Activated CD8-positive, alpha-beta memory T cell treated with anti-CD3 and anti-CD28 coated beads, Interleukin-2, amount 10 ng/mL, durations not matched to agents 7 days and 5 days (primary cell): ENCODE measurements at regions of chr1 and their contacts with region 1.

Region 1: GRCh38 chr1:37859507-37860345 is at the start of gene MTF1:
- DNase-seq: peak; percentile 98
- ATAC-seq: peak; percentile 99
- H3K4me3 Mint-ChIP-seq: peak within 1 kb of the TSS; percentile 93
- H3K27ac Mint-ChIP-seq: peak within 1 kb of the TSS; percentile 97
- H3K4me1 Mint-ChIP-seq: peaks cover 34% of the 10 kb centered on the region
- H3K27me3 Mint-ChIP-seq: no peaks in the 10 kb centered on the region
- total RNA-seq, gene MTF1: 26.4 to 29.3 TPM

Region 2: DNA sequence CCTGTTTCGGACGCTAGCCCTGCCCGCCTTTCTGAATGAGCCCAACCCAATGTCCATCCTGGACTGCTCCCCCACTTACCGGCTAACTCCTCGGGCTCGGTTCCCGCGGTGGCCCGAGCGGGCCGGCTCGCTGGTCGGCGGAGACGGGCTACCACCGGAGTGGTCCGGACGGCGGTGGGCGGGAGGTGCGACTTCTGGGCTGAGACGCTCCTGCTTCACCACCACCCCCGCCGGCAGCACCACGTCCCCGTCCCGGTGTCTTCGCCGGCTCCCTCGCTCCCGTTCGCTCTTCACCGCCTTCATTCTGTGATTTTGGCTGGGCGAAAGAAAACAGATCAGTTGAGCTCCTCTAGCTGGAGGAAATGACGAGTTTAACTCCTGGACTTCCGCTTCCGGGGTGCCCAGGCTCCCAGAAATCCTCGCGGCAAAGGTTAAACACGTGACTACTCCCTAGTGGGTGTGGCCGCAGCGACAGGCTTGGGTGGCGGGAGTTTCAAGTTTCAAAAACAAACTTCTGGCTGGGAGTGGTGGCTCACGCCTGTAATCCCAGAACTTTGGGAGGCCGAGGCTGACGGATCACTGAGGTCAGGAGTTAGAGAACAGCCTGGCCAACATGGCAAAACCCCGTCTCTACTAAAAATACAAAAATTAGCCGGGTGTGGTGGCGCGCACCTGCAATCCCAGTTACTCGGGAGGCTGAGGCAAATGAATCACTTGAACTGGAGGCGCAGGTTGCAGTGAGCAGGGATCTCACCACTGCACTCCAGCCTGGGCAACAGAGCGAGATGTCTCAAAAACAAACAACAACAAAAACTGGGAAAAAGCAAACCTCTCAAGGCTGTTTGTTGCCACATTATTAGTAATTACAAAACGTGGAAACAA is 305.6 kb before region 1 on chr1 and contains the start of gene SNIP1:
- CTCF ChIA-PET with region 1: interaction called, 11 read pairs
- DNase-seq: peak; percentile 96
- ATAC-seq: peak; percentile 92
- H3K4me3 Mint-ChIP-seq: peak within 1 kb of the TSS; percentile 94
- H3K27ac Mint-ChIP-seq: peak within 1 kb of the TSS; percentile 96
- H3K4me1 Mint-ChIP-seq: peaks cover 54% of the 10 kb centered on the region
- H3K27me3 Mint-ChIP-seq: no peaks in the 10 kb centered on the region
- total RNA-seq, gene SNIP1: 28.4 to 29.4 TPM

Region 3: GRCh38 chr1:37692078-37692833 is 167.5 kb before region 1 on chr1 and contains the start of gene CDCA8:
- CTCF ChIA-PET with region 1: interaction called, 17 read pairs
- DNase-seq: peak; percentile 99
- ATAC-seq: peak; percentile 88
- H3K4me3 Mint-ChIP-seq: peak within 1 kb of the TSS; percentile 94
- H3K27ac Mint-ChIP-seq: peak within 1 kb of the TSS; percentile 94
- H3K4me1 Mint-ChIP-seq: peaks cover 59% of the 10 kb centered on the region
- H3K27me3 Mint-ChIP-seq: no peaks in the 10 kb centered on the region
- total RNA-seq, gene CDCA8: 77.2 to 97.3 TPM

Region 4: GRCh38 chr1:37752583-37753471 is 106.9 kb before region 1 on chr1:
- CTCF ChIA-PET with region 1: no interaction called
- DNase-seq: no peak
- ATAC-seq: peak; percentile 68
- H3K4me3 Mint-ChIP-seq: peak overlapping the region; percentile 44
- H3K27ac Mint-ChIP-seq: no peak overlapping the region
- H3K4me1 Mint-ChIP-seq: peaks cover 7% of the 10 kb centered on the region
- H3K27me3 Mint-ChIP-seq: peaks cover 40% of the 10 kb centered on the region

Region 5: DNA sequence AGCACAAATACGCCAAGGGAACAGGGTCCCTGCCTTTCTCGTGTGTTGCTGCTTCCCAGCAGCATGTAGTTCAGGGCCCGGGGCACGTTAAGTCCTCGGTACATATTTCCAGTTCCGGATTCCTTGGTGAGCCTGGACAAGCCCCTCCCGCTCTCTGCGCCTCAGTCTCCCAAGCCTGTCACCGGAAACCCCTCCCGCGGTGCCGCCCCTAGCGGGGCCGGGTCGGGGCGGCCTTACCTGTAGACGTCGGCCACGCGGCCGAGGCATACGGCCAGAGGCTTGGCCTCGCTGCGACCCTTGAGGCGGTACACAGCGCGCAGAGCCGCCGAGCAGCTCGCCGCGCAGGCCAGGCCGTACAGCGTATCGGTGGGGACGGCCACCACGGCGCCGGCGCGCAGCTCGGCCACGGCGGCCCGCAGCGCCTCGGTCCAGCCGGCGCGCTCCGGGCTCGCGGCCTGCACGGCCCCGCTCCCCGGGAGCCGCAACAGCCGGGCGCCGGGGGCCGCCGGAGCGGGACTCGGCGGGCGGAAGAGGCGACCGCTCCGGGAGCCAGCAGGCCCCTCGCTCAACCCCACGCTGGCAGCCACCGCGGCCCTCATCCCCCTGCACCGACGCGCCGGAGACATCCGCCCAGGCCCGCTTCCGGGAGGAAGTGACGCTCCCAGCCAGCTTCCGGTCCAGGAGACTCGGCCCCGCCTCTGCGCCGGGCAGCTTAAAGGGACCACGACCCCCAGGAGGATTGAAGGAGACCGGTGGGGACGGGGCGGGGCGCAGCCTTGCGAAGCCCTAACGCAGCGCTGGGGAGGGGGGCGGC is 52.0 kb before region 1 on chr1 and contains the starts of genes C1orf122 and YRDC:
- CTCF ChIA-PET with region 1: interaction called, 38 read pairs
- DNase-seq: peak; percentile 95
- ATAC-seq: peak; percentile 92
- H3K4me3 Mint-ChIP-seq: peak within 1 kb of the TSS; percentile 87
- H3K27ac Mint-ChIP-seq: peak within 1 kb of the TSS; percentile 88
- H3K4me1 Mint-ChIP-seq: peaks cover 27% of the 10 kb centered on the region
- H3K27me3 Mint-ChIP-seq: no peaks in the 10 kb centered on the region
- total RNA-seq, gene C1orf122: 19.8 to 21.9 TPM
- total RNA-seq, gene YRDC: 16.4 to 28.6 TPM

Region 6: GRCh38 chr1:37822906-37823815 is 36.6 kb before region 1 on chr1:
- CTCF ChIA-PET with region 1: interaction called, 13 read pairs
- DNase-seq: peak; percentile 53
- ATAC-seq: peak; percentile 42
- H3K4me3 Mint-ChIP-seq: no peak overlapping the region
- H3K27ac Mint-ChIP-seq: peak overlapping the region; percentile 45
- H3K4me1 Mint-ChIP-seq: peaks cover 23% of the 10 kb centered on the region
- H3K27me3 Mint-ChIP-seq: no peaks in the 10 kb centered on the region

Region 7: GRCh38 chr1:37846647-37847339 is 12.9 kb before region 1 on chr1:
- CTCF ChIA-PET with region 1: interaction called, 39 read pairs
- DNase-seq: no peak
- ATAC-seq: no peak
- H3K4me3 Mint-ChIP-seq: peak overlapping the region; percentile 59
- H3K27ac Mint-ChIP-seq: peak overlapping the region; percentile 47
- H3K4me1 Mint-ChIP-seq: peaks cover 35% of the 10 kb centered on the region
- H3K27me3 Mint-ChIP-seq: no peaks in the 10 kb centered on the region

Region 8: GRCh38 chr1:37989361-37989930 is 129.7 kb after region 1 on chr1:
- CTCF ChIA-PET with region 1: interaction called, 10 read pairs
- DNase-seq: peak; percentile 67
- ATAC-seq: peak; percentile 55
- H3K4me3 Mint-ChIP-seq: peak overlapping the region; percentile 86
- H3K27ac Mint-ChIP-seq: peak overlapping the region; percentile 81
- H3K4me1 Mint-ChIP-seq: peaks cover 22% of the 10 kb centered on the region
- H3K27me3 Mint-ChIP-seq: no peaks in the 10 kb centered on the region